ENCODE measurements at regions of chrX and their contacts with region 1.

Region 1: GRCh38 chrX:129905787-129906580 is at the start of gene UTP14A:
- DNase-seq: peak; percentile 88 to 93 (median 90)
- ATAC-seq: peak; percentile 92 to 100 (median 99)
- H3K4me3 ChIP-seq: peak within 1 kb of the TSS; percentile 44 to 78 (median 67)
- H3K27ac ChIP-seq: peak within 1 kb of the TSS; percentile 24 to 85 (median 74)
- H3K4me1 ChIP-seq: peaks cover 0 to 8% (median 2%) of the 10 kb centered on the region in 12 donors
- H3K27me3 ChIP-seq: no peaks in the 10 kb centered on the region
- CTCF ChIP-seq: no peak
- POLR2A ChIP-seq: peak in 1 of 2 donors; percentile 26
- total RNA-seq, gene UTP14A: 7.3 to 10.6 (median 9.0) TPM

Region 2: GRCh38 chrX:129759576-129760061 is 146.4 kb before region 1 on chrX:
- intact Hi-C with region 1: loop called in 1 of 10 experiments (anchors 10 kb)
- DNase-seq: peak in 3 of 5 donors; percentile 35 to 50 (median 47)
- ATAC-seq: peak in 3 of 4 donors; percentile 64 to 85 (median 67)
- H3K4me3 ChIP-seq: no peak overlapping the region
- H3K27ac ChIP-seq: peak overlapping the region in 2 of 12 donors; percentile 14 to 83
- H3K4me1 ChIP-seq: peaks cover 0 to 41% (median 0%) of the 10 kb centered on the region in 12 donors
- H3K27me3 ChIP-seq: peaks cover 0 to 4% (median 0%) of the 10 kb centered on the region in 9 donors
- CTCF ChIP-seq: peak in 3 of 12 donors; percentile 12 to 40 (median 26)
- POLR2A ChIP-seq: no peak

Region 3: GRCh38 chrX:129843459-129844306 is 62.3 kb before region 1 on chrX and contains the start of gene ZDHHC9:
- intact Hi-C with region 1: loop called in 1 of 10 experiments (anchors 10 kb)
- DNase-seq: peak; percentile 88 to 92 (median 89)
- ATAC-seq: peak; percentile 92 to 99 (median 96)
- H3K4me3 ChIP-seq: peak within 1 kb of the TSS; percentile 59 to 85 (median 70)
- H3K27ac ChIP-seq: peak within 1 kb of the TSS; percentile 49 to 83 (median 74)
- H3K4me1 ChIP-seq: peaks cover 0 to 13% (median 3%) of the 10 kb centered on the region in 12 donors
- H3K27me3 ChIP-seq: peaks cover 0 to 10% (median 0%) of the 10 kb centered on the region in 9 donors
- CTCF ChIP-seq: peak in 2 of 12 donors; percentile 16 to 31
- POLR2A ChIP-seq: peak in 1 of 2 donors; percentile 47
- total RNA-seq, gene ZDHHC9: 8.1 to 39.0 (median 13.2) TPM